Activated T-helper 2 cell treated with anti-CD3 and anti-CD28 coated beads, Interferon-gamma antibody, Interleukin-2, Interleukin-4, amounts not matched to agents 10 μg/mL and 5 μg/mL and 100 μg/mL, durations not matched to agents 14 hours and 24 hours and 36 hours (primary cell): ENCODE measurements at regions of chr12 and their contacts with region 1.

Region 1: DNA sequence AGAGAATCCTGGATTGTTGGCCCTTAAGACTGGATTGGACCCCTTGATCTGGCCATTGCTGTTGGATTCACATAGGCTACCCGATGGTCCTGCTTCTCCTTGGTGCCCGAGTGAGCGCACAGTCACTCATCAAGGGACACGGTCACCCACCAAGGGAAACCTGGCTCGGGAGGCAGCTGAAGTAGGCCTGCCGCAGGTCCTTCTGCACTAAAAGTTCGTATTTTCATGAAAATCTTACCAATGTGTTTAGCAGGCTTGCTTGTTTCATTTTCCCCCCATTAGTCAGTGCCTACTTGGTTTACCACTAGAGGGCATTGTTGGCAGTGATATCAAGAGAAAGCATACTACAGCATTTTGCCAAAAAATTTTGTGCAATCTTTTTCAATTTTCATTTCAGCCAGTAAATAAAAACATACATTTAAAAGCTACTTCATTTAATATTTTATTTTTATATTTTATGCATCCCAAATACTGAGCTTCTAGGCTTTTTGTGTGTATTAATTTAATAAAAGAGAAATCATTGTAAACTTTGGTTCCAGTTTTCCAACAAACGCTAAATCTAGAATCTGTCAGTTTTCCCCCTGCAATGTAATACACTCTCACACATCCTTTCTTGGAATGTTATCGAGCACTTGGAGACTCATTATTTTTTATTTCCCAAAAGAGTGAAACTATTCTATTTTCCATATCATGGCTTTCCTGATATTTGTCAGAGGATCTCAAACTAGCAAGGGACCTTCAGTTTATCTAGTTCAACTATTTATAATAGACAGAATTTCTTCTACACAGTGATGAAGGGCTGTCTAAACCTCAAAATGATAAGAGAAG is 116.7 kb downstream of the LMNTD1 start:
- DNase-seq: peak; percentile 22
- H3K4me3 Mint-ChIP-seq: peak overlapping the region; percentile 55
- H3K27ac Mint-ChIP-seq: no peak overlapping the region
- H3K4me1 Mint-ChIP-seq: peaks cover 24% of the 10 kb centered on the region
- H3K27me3 Mint-ChIP-seq: peaks cover 12% of the 10 kb centered on the region

Region 2: DNA sequence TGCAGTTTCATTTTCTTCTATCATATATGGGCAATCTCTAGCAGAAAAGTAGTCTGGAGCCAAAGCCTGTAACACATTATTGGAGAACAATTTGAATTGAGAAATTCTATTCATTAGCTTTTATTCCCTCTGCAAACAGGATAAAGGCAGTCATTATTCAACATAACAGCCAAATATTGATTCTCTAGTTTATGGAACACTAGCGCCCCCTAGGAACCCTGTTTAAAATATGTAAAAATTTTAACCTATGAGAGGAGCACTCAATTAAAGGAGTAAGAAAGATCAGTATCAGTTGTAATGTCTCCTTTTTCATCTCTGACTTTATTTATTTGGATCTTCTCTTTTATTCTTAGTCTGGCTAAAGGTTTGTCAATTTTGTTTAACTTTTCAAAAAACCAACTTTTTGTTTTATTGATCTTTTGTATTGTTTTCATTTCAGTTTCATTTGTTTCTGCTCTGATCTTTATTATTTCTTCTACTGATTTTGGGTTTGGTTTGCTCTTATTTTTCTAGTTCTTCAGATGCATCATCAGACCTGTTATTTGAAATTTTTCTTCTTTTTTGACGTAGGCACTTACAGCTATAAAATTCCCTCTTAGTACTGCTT is 121.5 kb after region 1 on chr12:
- intact Hi-C with region 1: loop called (anchors 5 kb)
- DNase-seq: no peak
- H3K4me3 Mint-ChIP-seq: no peak overlapping the region
- H3K27ac Mint-ChIP-seq: no peak overlapping the region
- H3K4me1 Mint-ChIP-seq: peaks cover 11% of the 10 kb centered on the region
- H3K27me3 Mint-ChIP-seq: peaks cover 4% of the 10 kb centered on the region

Region 3: GRCh38 chr12:25775968-25776367 is 339.6 kb after region 1 on chr12:
- intact Hi-C with region 1: loop called (anchors 10 kb)
- DNase-seq: no peak
- H3K4me3 Mint-ChIP-seq: no peak overlapping the region
- H3K27ac Mint-ChIP-seq: no peak overlapping the region
- H3K4me1 Mint-ChIP-seq: no peaks in the 10 kb centered on the region
- H3K27me3 Mint-ChIP-seq: peaks cover 4% of the 10 kb centered on the region

Region 4: GRCh38 chr12:26028953-26029735 is 592.7 kb after region 1 on chr12:
- intact Hi-C with region 1: loop called (anchors 1 kb)
- DNase-seq: no peak
- H3K4me3 Mint-ChIP-seq: no peak overlapping the region
- H3K27ac Mint-ChIP-seq: no peak overlapping the region
- H3K4me1 Mint-ChIP-seq: no peaks in the 10 kb centered on the region
- H3K27me3 Mint-ChIP-seq: peaks cover 17% of the 10 kb centered on the region